Activated CD4-positive, alpha-beta T cell treated with anti-CD3 and anti-CD28 coated beads, Interleukin-2, amount 10 ng/mL, durations not matched to agents 24 days and 14 days (primary cell): ENCODE measurements at regions of chr11 and their contacts with region 1.

Region 1: DNA sequence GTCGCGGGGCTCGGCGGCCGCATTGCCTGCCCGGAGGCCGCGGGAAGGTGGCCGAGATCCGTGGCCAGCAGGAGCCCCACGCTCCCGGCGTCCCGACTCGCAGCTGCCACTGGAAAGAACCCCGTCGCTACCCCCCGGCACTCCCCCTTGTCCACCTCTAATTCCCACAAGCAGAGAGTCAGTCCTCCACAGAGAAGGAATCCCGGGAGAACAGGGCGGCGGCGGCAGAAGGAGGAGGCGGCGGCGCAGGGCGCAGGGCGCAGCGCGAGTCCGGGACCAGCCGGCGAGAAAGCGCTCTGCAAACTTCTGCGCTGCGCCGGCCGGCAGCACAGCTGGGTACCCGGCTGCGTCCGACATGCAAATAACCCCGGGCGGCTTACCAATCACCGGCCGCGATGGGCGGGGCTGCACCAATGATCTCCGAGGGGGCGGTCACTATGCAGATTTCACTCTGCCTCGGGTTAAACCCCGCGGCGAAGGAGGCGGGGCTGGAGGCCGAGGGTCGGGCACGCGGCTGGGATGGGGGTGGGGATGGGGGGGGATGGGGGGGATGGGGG is at the start of gene ABTB2:
- DNase-seq: peak; percentile 99
- H3K4me3 Mint-ChIP-seq: peak within 1 kb of the TSS; percentile 83
- H3K27ac Mint-ChIP-seq: peak within 1 kb of the TSS; percentile 70
- H3K4me1 Mint-ChIP-seq: peaks cover 27% of the 10 kb centered on the region
- H3K27me3 Mint-ChIP-seq: peaks cover 48% of the 10 kb centered on the region
- total RNA-seq, gene ABTB2: 13.1 and 14.1 TPM in 2 replicates

Region 2: GRCh38 chr11:33857933-33858371 is 499.8 kb before region 1 on chr11:
- intact Hi-C with region 1: loop called (anchors 10 kb)
- DNase-seq: peak; percentile 90
- H3K4me3 Mint-ChIP-seq: no peak overlapping the region
- H3K27ac Mint-ChIP-seq: no peak overlapping the region
- H3K4me1 Mint-ChIP-seq: no peaks in the 10 kb centered on the region
- H3K27me3 Mint-ChIP-seq: peaks cover 43% of the 10 kb centered on the region

Region 3: GRCh38 chr11:34051349-34052035 is 306.3 kb before region 1 on chr11 and contains the start of gene CAPRIN1:
- intact Hi-C with region 1: loop called (anchors 1 kb)
- DNase-seq: peak; percentile 95
- H3K4me3 Mint-ChIP-seq: peak within 1 kb of the TSS; percentile 100
- H3K27ac Mint-ChIP-seq: peak within 1 kb of the TSS; percentile 99
- H3K4me1 Mint-ChIP-seq: peaks cover 14% of the 10 kb centered on the region
- H3K27me3 Mint-ChIP-seq: peaks cover 5% of the 10 kb centered on the region
- total RNA-seq, gene CAPRIN1: 318 and 321 TPM in 2 replicates

Region 4: DNA sequence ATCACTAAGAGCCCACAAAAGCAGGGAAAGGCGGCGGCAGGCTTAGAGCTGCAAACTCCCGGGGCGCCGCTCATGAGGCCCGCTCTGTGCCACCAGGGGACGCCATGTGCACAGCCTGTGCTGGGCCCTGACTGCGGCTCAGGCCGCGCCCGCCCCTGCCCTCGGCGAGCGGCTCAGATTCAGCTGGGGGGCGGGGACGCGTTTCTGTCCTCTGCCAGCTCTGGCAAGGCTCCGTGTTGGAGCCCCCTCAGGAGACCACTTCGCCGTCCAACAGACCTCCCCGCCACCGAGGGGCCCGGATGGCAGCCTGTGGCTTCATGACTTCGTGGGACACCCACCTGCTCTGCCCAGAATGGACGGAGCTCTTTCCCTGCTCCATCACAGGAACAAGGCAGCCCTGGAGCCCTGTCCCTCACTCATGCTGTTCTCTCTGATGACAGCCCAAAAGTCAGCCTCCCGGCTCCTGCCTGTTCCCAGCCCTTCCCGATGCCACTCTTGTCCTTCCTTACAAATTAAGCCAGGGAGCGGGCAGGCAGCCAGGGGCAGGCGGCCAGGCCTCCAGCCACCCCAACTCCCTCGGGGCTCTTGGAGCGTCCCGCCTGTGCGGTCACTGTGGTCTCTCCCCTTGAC is 183.3 kb before region 1 on chr11:
- intact Hi-C with region 1: loop called (anchors 1 kb)
- DNase-seq: peak; percentile 95
- H3K4me3 Mint-ChIP-seq: peak overlapping the region; percentile 79
- H3K27ac Mint-ChIP-seq: peak overlapping the region; percentile 53
- H3K4me1 Mint-ChIP-seq: peaks cover 17% of the 10 kb centered on the region
- H3K27me3 Mint-ChIP-seq: peaks cover 7% of the 10 kb centered on the region

Region 5: DNA sequence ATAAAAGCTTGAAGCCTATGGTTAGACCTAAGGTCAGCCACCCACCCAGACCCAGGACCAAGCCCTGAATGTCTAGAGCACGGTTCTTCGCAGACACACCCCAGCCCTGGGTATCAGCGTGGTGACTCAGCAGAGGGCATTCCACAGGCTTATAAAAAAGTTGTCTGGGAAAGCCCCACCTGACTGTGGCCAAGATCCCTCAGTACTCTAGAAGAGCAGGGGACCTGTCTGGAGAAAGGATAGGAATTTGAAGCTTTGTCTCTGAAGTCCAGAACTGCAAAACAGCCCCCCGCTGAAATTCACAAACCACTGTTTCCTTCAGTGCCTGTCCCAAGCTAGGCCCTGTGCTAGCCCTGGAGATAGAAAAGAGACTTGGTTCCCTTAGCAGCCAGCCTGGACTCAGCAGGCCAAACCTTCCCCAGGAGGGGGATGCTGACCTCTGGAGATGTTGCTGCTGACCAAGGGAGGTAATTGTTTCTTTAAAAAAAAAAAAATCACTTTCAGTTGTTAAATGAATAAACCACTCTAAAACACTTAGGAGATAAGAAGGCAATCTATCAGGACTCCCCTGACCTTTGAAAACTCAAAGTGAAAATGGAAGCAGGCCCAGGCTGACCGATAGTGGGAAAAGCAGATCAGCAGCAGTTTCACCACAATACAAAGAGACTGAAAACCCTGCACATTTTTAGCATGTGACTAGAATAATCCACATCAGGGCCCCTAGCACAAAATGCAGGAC is 113.9 kb before region 1 on chr11:
- intact Hi-C with region 1: loop called (anchors 2 kb)
- DNase-seq: peak; percentile 82
- H3K4me3 Mint-ChIP-seq: peak overlapping the region; percentile 62
- H3K27ac Mint-ChIP-seq: peak overlapping the region; percentile 72
- H3K4me1 Mint-ChIP-seq: peaks cover 80% of the 10 kb centered on the region
- H3K27me3 Mint-ChIP-seq: no peaks in the 10 kb centered on the region

Region 6: DNA sequence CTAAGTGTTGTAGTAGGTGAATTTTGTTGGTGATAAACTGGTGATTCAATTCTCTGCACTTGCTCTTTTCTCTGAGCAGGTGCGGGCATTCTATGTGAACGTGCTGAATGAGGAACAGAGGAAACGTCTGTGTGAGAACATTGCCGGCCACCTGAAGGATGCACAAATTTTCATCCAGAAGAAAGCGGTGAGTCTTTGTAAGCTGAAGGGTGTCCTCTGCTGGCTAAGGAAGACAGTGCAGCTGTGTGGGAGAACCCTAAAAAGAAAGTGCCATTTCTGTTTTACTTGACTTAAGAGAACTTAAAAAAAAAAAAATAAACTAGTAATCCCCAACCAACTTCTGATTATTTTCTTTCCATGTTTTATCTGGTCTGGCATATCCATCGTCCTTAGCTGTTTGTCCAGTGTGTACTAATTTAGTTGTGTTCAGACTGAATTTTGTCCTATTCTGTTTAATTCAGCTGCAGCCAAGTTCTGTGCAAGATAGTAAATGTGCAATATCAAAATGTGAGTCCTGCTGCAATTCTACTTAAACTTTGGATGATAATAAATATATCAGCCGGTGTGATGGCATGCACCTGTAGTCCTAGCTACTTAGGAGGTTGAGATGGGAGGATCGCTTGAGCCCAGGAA is 110.5 kb after region 1 on chr11:
- intact Hi-C with region 1: loop called (anchors 2 kb)
- DNase-seq: peak; percentile 82
- H3K4me3 Mint-ChIP-seq: no peak overlapping the region
- H3K27ac Mint-ChIP-seq: no peak overlapping the region
- H3K4me1 Mint-ChIP-seq: peaks cover 11% of the 10 kb centered on the region
- H3K27me3 Mint-ChIP-seq: no peaks in the 10 kb centered on the region

Region 7: GRCh38 chr11:34960277-34960676 is 602.5 kb after region 1 on chr11:
- intact Hi-C with region 1: no loop called
- DNase-seq: no peak
- H3K4me3 Mint-ChIP-seq: no peak overlapping the region
- H3K27ac Mint-ChIP-seq: no peak overlapping the region
- H3K4me1 Mint-ChIP-seq: no peaks in the 10 kb centered on the region
- H3K27me3 Mint-ChIP-seq: no peaks in the 10 kb centered on the region

Region 8: GRCh38 chr11:35969089-35970042 is 1611.6 kb after region 1 on chr11:
- intact Hi-C with region 1: no loop called
- DNase-seq: no peak
- H3K4me3 Mint-ChIP-seq: no peak overlapping the region
- H3K27ac Mint-ChIP-seq: no peak overlapping the region
- H3K4me1 Mint-ChIP-seq: peaks cover 4% of the 10 kb centered on the region
- H3K27me3 Mint-ChIP-seq: peaks cover 4% of the 10 kb centered on the region